Natural killer cell (primary cell): ENCODE measurements at regions of chr11 and their contacts with region 1.

Region 1: DNA sequence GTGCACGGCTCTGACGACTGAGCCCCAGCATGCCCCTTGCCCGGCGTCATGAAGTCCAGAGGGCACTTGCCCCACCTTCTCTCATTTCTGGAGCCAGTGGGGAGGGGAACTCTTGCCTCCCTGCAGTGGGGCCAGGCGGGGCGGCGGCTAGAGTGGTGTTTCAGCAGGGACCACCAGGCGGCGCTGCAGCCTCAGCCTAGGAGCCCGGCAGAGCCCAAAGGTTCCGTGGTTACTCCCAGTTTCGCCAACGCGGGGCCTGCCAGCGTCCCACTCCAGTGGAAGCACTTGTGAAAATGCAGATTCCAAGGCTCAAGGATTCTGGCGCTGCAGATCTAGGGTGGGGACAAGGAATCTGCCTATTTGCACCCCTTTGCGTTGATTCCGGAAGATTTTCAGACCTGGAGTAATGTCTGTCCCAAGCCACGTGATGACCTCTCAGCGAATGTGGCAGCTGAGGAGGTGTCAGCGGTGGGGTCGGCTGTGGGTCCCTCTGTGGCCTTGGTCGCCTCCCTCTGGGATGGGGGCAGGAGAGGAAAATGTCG is 55.7 kb downstream of the CD82 start:
- DNase-seq: peak; percentile 23 to 72
- ATAC-seq: peak; percentile 36 to 66 (median 46)
- H3K4me3 ChIP-seq: no peak overlapping the region
- H3K4me3 Mint-ChIP-seq: no peak overlapping the region
- H3K27ac ChIP-seq: no peak overlapping the region
- H3K27ac Mint-ChIP-seq: no peak overlapping the region
- H3K4me1 ChIP-seq: peaks cover 5% of the 10 kb centered on the region
- H3K4me1 Mint-ChIP-seq: no peaks in the 10 kb centered on the region
- H3K27me3 ChIP-seq: no peaks in the 10 kb centered on the region
- H3K27me3 Mint-ChIP-seq: no peaks in the 10 kb centered on the region
- CTCF ChIP-seq: peak; percentile 37

Region 2: DNA sequence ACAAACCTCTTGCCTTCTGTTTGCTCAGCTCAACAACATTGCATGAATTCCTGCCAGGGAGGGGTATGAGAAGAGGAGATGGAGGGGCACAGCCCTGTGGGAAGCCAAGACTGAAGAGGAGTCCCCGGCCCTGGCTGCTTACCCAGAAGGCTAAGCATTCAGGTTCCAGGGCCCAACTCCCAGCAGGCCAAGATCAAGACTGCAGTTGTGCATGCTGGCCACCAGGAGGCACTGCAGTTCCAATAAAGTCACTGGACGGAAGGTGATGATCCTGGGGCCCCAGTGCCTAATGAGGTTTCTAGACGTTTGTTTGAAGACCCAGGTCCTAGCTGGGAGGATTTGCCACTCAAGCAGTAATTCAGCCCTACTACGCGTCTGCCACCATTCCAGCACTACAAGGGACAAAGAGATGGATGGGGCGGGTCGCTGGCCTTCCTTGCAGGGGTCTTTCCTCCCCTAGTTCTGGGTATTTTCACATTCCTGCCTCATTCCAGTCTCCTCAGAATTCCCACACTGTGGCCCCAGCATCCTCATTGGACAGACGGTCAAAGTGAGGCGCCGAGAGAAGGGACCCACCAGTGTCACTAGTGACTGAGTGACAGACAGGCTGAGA is 334.8 kb before region 1 on chr11:
- intact Hi-C with region 1: loop called (anchors 2 kb)
- DNase-seq: peak; percentile 34 to 75
- ATAC-seq: peak; percentile 58 to 84 (median 67)
- H3K4me3 ChIP-seq: no peak overlapping the region
- H3K4me3 Mint-ChIP-seq: no peak overlapping the region
- H3K27ac ChIP-seq: no peak overlapping the region
- H3K27ac Mint-ChIP-seq: no peak overlapping the region
- H3K4me1 ChIP-seq: no peaks in the 10 kb centered on the region
- H3K4me1 Mint-ChIP-seq: peaks cover 0 to 4% of the 10 kb centered on the region in 2 donors
- H3K27me3 ChIP-seq: no peaks in the 10 kb centered on the region
- H3K27me3 Mint-ChIP-seq: no peaks in the 10 kb centered on the region
- CTCF ChIP-seq: peak; percentile 94

Region 3: DNA sequence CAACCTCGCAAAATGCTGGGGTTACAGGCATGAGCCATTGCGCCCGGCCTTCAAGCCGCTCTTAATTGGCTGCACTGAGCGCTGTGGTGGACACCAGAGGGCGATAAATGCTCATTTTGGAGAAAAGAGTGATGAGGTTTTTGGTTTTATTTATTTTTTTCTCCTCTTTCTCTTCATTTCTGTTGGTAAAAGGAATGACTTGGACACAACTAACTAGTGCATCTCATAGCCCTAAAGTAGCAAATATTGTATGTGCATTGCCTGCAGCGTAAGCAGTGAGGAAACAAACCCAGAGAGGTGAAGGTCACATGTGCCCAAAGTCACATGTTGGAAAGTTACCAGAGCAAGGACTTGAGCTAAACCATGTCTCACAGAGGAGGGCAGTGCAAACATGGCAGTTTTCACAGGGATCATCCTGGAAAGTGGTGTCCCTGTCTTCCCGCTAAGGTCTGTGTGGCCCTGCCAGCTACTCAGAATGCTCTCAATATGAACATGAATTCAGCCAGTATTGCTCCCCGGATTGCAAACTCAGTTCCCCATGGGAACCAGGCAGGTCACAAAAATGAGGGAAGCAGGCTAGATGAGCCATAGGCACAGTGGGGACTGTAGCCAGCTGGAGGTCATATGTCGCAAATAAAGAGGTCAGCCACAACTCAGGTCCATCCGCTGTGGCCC is 64.3 kb before region 1 on chr11:
- intact Hi-C with region 1: loop called (anchors 1 kb)
- DNase-seq: peak; percentile 42 to 85
- ATAC-seq: peak; percentile 64 to 78 (median 75)
- H3K4me3 ChIP-seq: no peak overlapping the region
- H3K4me3 Mint-ChIP-seq: no peak overlapping the region
- H3K27ac ChIP-seq: peak overlapping the region; percentile 42
- H3K27ac Mint-ChIP-seq: no peak overlapping the region
- H3K4me1 ChIP-seq: peaks cover 21% of the 10 kb centered on the region
- H3K4me1 Mint-ChIP-seq: peaks cover 8 to 13% of the 10 kb centered on the region in 2 donors
- H3K27me3 ChIP-seq: no peaks in the 10 kb centered on the region
- H3K27me3 Mint-ChIP-seq: no peaks in the 10 kb centered on the region
- CTCF ChIP-seq: peak; percentile 76

Region 4: GRCh38 chr11:44568658-44569473 is 52.3 kb before region 1 on chr11:
- intact Hi-C with region 1: no loop called
- DNase-seq: peak; percentile 67 to 92
- ATAC-seq: peak; percentile 49 to 73 (median 61)
- H3K4me3 ChIP-seq: peak overlapping the region; percentile 6
- H3K4me3 Mint-ChIP-seq: peak overlapping the region; percentile 49
- H3K27ac ChIP-seq: peak overlapping the region; percentile 72
- H3K27ac Mint-ChIP-seq: peak overlapping the region; percentile 12 to 87
- H3K4me1 ChIP-seq: peaks cover 78% of the 10 kb centered on the region
- H3K4me1 Mint-ChIP-seq: peaks cover 29 to 62% of the 10 kb centered on the region in 2 donors
- H3K27me3 ChIP-seq: no peaks in the 10 kb centered on the region
- H3K27me3 Mint-ChIP-seq: peaks cover 0 to 5% of the 10 kb centered on the region in 2 donors
- CTCF ChIP-seq: no peak